Body of pancreas (tissue), 4 donors: ENCODE measurements at regions of chr5 and their contacts with region 1.

Region 1: GRCh38 chr5:90854169-90854568 is 295.6 kb downstream of the ADGRV1 start:
- DNase-seq: no peak
- ATAC-seq: no peak
- H3K4me3 ChIP-seq: no peak overlapping the region
- H3K27ac ChIP-seq: no peak overlapping the region
- H3K4me1 ChIP-seq: no peaks in the 10 kb centered on the region
- H3K27me3 ChIP-seq: no peaks in the 10 kb centered on the region
- CTCF ChIP-seq: no peak
- POLR2A ChIP-seq: no peak

Region 2: DNA sequence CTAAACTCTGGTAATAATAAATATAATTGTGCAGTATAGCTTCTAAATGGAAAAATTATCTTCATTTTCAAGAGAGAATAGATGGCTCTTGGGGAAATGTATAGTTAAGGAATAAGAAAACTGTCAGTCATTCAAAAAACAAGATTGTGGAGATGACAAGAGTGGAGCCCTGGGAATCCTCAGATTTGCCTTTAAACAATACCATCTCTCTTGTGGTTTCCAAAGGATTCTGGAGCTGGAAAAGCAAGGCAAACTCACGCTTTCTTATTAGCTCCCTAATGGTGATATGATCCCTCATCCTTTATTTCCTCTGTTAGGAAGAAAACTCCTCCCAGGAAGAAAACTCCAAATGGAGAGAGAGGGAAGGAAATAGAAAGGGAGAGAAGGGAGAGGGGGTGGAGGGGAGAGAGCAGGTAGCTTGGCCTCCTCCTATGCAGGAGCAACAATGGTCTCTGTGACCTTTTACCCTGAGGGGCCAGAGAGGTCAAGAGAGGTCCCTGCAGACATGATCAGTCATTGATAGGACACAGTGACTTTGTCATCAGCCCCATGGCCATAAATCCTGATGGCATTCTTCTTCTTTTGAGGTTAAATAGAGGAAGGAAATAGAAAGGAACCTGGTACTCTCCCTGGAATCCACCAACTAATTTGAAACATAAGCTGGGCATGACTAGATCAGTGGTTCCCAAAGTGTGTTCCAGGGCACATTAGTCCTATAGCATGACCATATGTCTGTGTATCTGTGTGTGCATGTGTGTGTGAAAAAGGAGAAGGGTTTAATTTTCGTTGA is 216.8 kb after region 1 on chr5:
- intact Hi-C with region 1: no loop called
- DNase-seq: no peak
- ATAC-seq: no peak
- H3K4me3 ChIP-seq: no peak overlapping the region
- H3K27ac ChIP-seq: no peak overlapping the region
- H3K4me1 ChIP-seq: no peaks in the 10 kb centered on the region
- H3K27me3 ChIP-seq: no peaks in the 10 kb centered on the region
- CTCF ChIP-seq: no peak
- POLR2A ChIP-seq: no peak

Region 3: GRCh38 chr5:91352831-91353695 is 498.9 kb after region 1 on chr5:
- intact Hi-C with region 1: no loop called
- DNase-seq: no peak
- ATAC-seq: no peak
- H3K4me3 ChIP-seq: no peak overlapping the region
- H3K27ac ChIP-seq: no peak overlapping the region
- H3K4me1 ChIP-seq: peaks cover 15% of the 10 kb centered on the region
- H3K27me3 ChIP-seq: no peaks in the 10 kb centered on the region
- CTCF ChIP-seq: no peak
- POLR2A ChIP-seq: no peak

Region 4: GRCh38 chr5:91403438-91403837 is 549.3 kb after region 1 on chr5:
- intact Hi-C with region 1: loop called (anchors 10 kb)
- DNase-seq: no peak
- ATAC-seq: no peak
- H3K4me3 ChIP-seq: no peak overlapping the region
- H3K27ac ChIP-seq: no peak overlapping the region
- H3K4me1 ChIP-seq: no peaks in the 10 kb centered on the region
- H3K27me3 ChIP-seq: no peaks in the 10 kb centered on the region
- CTCF ChIP-seq: no peak
- POLR2A ChIP-seq: no peak